Panc1 (cell line): ENCODE measurements at regions of chr1 and their contacts with region 1.

Region 1: DNA sequence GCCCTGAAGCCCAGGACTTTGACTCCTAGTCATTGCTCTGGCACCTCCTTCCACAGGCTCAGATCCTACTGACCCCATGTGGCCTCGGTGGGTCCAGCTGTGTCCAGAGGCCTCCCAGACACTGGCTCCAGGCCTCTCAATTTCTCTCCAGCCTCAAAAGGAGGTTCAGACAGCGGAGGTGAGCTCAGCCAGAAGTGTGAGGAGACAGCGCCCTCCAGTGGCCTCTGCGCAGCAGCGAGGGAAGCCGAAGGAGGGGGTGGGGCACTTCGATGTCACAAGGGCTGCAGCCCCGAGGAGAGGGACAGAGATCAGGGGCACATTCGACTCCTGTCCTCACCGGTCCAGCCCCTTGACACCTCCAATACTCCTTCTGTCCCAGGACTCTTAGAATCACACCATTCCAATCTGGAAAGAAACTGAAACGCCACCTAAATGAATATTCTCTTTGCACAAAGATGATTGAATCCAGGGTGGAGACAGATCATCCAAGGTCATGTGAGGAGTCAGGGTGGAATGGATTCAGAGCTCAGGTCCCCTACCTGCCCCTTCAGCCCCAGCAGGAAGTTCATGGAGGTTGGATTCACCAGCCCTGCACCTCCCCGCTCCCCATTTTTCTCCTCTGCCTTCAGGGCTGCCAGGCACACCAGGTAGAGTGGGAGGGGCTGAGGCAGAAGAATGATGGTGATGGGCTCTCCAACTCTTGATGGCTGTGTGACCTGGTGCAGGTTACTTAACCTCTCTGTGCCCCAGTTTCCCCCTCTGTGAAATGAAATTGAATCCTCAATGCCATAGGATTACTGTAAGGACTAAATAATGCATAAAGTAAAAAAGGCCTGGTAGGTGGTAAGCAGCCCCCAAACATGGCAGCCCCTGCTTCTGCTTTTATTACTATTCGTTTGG is 34.8 kb upstream of the ZBTB40 start:
- DNase-seq: no peak
- ATAC-seq: peak; percentile 78
- H3K4me3 ChIP-seq: peak overlapping the region in 1 of 2 experiments; percentile 12; a peak in 1 of 4 replicates
- H3K27ac ChIP-seq: no peak overlapping the region
- H3K4me1 ChIP-seq: peaks cover 13% of the 10 kb centered on the region
- H3K27me3 ChIP-seq: no peaks in the 10 kb centered on the region; the same call in 1 of the 2 replicates
- CTCF ChIP-seq: peak; percentile 95

Region 2: DNA sequence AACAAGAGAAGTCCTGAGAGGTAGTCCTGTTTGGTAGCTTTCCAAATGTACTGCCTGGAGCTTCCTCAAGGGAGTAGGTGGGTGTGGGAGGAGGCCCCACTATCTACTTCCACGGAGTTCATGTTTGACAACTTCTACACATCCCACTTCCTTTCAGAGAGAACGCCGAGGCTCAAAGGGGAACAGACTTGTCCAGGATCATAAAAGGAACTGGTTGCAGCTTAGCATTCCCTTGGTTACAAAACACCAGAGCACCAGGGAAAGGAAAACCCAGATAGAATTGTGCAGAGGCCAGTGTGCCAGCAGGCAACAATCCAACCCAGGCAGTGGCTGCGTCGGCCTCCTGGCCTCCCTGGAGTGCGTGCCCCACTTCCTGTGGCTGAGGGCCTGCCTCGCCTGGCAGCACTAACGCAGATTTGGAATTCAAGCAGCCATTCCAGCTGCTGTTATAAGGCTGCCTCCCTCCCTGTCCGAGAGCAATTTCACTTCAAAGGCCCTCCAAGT is 743.5 kb before region 1 on chr1:
- CTCF ChIA-PET with region 1: interaction called, 11 read pairs
- POLR2A ChIA-PET with region 1: no interaction called
- in situ Hi-C with region 1: no loop called
- intact Hi-C with region 1: no loop called
- DNase-seq: no peak
- ATAC-seq: peak; percentile 24; the same call in 1 of the 2 replicates
- H3K4me3 ChIP-seq: no peak overlapping the region
- H3K27ac ChIP-seq: no peak overlapping the region
- H3K4me1 ChIP-seq: peaks cover 15% of the 10 kb centered on the region
- H3K27me3 ChIP-seq: no peaks in the 10 kb centered on the region
- CTCF ChIP-seq: no peak

Region 3: GRCh38 chr1:22105611-22106207 is 311.1 kb before region 1 on chr1:
- CTCF ChIA-PET with region 1: interaction called, 5 read pairs
- POLR2A ChIA-PET with region 1: no interaction called
- in situ Hi-C with region 1: no loop called
- intact Hi-C with region 1: loop called (anchors 10 kb)
- DNase-seq: peak; percentile 36
- ATAC-seq: peak; percentile 73
- H3K4me3 ChIP-seq: no peak overlapping the region
- H3K27ac ChIP-seq: no peak overlapping the region
- H3K4me1 ChIP-seq: no peaks in the 10 kb centered on the region; the same call in 1 of the 2 replicates
- H3K27me3 ChIP-seq: no peaks in the 10 kb centered on the region
- CTCF ChIP-seq: peak; percentile 88

Region 4: GRCh38 chr1:22131875-22132486 is 284.8 kb before region 1 on chr1:
- CTCF ChIA-PET with region 1: interaction called, 12 read pairs
- POLR2A ChIA-PET with region 1: no interaction called
- in situ Hi-C with region 1: no loop called
- intact Hi-C with region 1: loop called (anchors 2 kb)
- DNase-seq: no peak
- ATAC-seq: peak; percentile 68
- H3K4me3 ChIP-seq: no peak overlapping the region
- H3K27ac ChIP-seq: peak overlapping the region; percentile 44; the same call in 1 of the 2 replicates
- H3K4me1 ChIP-seq: peaks cover 32% of the 10 kb centered on the region
- H3K27me3 ChIP-seq: no peaks in the 10 kb centered on the region
- CTCF ChIP-seq: peak; percentile 96

Region 5: DNA sequence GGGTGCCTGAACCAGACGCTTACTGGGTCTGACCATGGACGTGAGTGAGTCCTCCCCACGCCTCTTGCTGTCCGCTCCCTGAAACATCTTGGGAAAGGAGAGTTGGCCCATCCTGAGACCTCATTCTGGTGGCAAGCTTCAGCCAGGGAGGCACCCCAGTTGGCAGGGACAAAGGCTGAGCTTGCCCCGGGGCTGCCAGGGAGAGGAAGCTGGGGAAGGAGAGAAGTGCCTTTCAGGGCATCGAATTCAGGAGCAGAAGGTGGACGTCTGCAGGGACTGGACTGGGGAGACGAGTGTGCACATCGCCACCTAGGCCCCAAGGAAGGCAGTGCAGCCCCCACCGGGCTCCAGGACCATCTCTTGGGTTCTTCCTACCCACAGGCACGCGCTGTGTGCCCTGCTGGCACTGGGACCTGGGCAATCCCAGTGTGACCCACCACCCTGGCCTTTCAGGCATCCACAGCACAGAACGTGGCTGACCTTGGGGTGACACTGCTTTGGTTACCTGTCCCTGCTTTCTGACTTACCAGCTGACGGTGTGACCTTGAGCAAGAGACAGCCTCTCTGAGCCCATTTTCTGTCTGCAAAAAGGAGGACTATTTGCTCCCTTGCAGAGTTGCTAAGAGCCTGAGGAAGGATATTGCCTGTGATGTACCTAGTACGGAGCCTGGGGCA is 140.9 kb before region 1 on chr1:
- CTCF ChIA-PET with region 1: no interaction called
- POLR2A ChIA-PET with region 1: interaction called, 12 read pairs
- in situ Hi-C with region 1: no loop called
- intact Hi-C with region 1: no loop called
- DNase-seq: peak; percentile 33
- ATAC-seq: peak; percentile 93
- H3K4me3 ChIP-seq: no peak overlapping the region
- H3K27ac ChIP-seq: no peak overlapping the region
- H3K4me1 ChIP-seq: no peaks in the 10 kb centered on the region
- H3K27me3 ChIP-seq: no peaks in the 10 kb centered on the region
- CTCF ChIP-seq: peak; percentile 96

Region 6: DNA sequence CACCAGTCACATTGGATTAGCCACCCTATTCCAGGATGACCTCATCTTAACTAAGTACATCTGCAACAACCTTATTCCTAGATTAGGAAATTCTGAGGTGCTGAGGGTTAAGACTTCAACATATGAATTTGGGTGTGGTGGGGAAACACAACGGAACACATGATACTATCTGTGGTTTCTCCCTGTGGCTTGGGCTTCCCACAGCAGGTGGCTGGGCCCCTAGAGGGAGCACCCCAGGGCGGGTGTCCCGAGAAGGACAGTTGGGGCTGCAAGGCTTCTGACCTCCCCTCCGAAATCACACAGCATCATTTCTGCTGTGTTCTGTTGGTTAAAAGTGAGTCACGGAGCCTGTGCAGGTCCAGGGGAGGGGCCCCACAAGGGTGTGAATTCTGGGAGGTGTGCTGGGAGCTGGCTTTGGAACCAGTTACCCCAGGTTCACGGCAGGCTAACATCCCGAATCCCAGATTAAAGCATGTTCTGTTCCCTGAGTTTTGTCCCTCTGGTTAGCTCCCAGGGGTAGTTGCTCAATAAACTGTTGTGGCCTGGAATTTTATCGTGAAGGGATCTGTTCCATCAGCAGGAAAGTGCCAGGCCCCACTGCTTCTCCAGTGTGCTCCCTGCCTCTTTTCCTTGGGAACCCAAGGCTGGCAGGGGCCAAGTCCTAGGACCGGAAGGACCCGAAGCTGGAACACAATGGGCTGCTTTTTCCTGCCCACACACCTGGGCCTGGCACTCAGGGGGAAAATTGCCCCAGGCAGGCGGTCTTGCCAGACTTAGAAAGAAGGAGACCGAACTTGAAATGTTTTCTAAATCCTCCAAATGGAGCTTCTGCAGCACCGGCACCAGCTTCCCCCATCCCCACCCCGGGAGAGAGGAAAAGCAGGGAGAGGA is 119.9 kb before region 1 on chr1:
- CTCF ChIA-PET with region 1: interaction called, 15 read pairs
- POLR2A ChIA-PET with region 1: no interaction called
- in situ Hi-C with region 1: no loop called
- intact Hi-C with region 1: no loop called
- DNase-seq: no peak
- ATAC-seq: no peak
- H3K4me3 ChIP-seq: no peak overlapping the region
- H3K27ac ChIP-seq: no peak overlapping the region
- H3K4me1 ChIP-seq: no peaks in the 10 kb centered on the region
- H3K27me3 ChIP-seq: peaks cover 5% of the 10 kb centered on the region
- CTCF ChIP-seq: no peak

Region 7: DNA sequence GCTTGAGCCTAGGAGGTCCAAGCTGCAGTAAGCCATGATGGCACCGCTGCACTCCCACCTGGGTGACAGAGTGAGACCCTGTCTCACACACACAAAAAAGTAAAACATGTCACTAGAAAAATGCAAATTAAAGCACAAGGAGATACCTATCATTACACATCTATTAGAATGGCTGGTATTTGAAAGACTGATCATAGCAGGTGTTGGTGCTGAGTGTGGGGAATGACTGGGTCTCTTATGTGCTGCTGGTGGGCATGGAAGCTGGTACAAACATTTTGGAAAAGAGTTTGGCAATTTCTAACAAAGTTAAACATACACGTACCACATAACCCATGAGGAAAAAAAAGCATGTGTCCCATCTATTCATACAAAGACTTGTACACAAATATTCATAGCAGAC is 107.2 kb before region 1 on chr1:
- CTCF ChIA-PET with region 1: no interaction called
- POLR2A ChIA-PET with region 1: no interaction called
- in situ Hi-C with region 1: no loop called
- intact Hi-C with region 1: no loop called
- DNase-seq: no peak
- ATAC-seq: no peak
- H3K4me3 ChIP-seq: no peak overlapping the region
- H3K27ac ChIP-seq: no peak overlapping the region
- H3K4me1 ChIP-seq: no peaks in the 10 kb centered on the region
- H3K27me3 ChIP-seq: peaks cover 27% of the 10 kb centered on the region
- CTCF ChIP-seq: no peak

Region 8: DNA sequence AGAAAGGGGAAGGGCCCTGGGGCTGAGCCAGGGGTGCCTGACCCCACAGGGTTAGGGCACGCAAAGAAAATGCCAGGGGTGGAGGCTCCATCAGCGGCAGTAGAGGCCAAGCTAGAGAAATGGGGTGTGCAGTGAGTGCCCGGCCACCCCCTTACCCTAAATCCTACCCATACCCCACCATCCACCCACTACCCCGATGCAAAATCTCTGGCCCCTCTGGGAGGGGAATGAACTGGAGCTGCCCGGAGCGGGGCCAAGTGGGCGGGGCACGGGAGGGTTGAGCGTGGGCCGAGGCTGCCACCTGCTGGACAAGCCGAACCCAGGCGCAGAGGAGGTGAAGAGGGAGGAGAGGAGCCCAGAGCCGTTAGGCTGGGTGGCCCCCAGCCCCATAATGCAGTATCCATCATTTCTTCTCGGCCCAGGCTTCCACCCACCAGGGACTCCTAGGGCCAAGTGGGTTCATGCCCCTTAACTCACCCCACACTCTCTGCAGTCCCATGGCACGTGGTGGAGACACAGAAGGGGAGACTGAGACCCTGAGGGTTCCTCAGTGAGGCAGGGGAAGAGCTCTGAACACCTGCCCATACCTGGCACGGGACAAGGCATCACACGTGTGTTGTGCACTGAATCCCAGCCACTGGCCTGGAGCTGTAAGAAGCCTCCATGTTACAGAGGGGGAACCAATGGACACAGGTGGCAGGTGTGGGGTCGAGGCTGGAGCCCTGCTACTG is 225.3 kb after region 1 on chr1:
- CTCF ChIA-PET with region 1: interaction called, 4 read pairs
- POLR2A ChIA-PET with region 1: no interaction called
- in situ Hi-C with region 1: no loop called
- intact Hi-C with region 1: loop called (anchors 1 kb)
- DNase-seq: peak; percentile 18
- ATAC-seq: peak; percentile 90
- H3K4me3 ChIP-seq: peak overlapping the region in 1 of 2 experiments; percentile 32; a peak in 2 of 4 replicates
- H3K27ac ChIP-seq: no peak overlapping the region
- H3K4me1 ChIP-seq: no peaks in the 10 kb centered on the region
- H3K27me3 ChIP-seq: no peaks in the 10 kb centered on the region
- CTCF ChIP-seq: peak; percentile 95